Upper lobe of right lung (tissue), 1 donor: ENCODE measurements at regions of chr7 and their contacts with region 1.

Region 1: GRCh38 chr7:39582536-39582935 is 16.3 kb downstream of the YAE1 start:
- DNase-seq: no peak
- ATAC-seq: no peak
- H3K4me3 ChIP-seq: no peak overlapping the region
- H3K27ac ChIP-seq: no peak overlapping the region
- H3K4me1 ChIP-seq: no peaks in the 10 kb centered on the region
- H3K27me3 ChIP-seq: no peaks in the 10 kb centered on the region
- CTCF ChIP-seq: no peak

Region 2: GRCh38 chr7:38438970-38439369 is 1143.6 kb before region 1 on chr7:
- intact Hi-C with region 1: no loop called
- DNase-seq: no peak
- ATAC-seq: no peak
- H3K4me3 ChIP-seq: no peak overlapping the region
- H3K27ac ChIP-seq: no peak overlapping the region
- H3K4me1 ChIP-seq: no peaks in the 10 kb centered on the region
- H3K27me3 ChIP-seq: no peaks in the 10 kb centered on the region
- CTCF ChIP-seq: no peak

Region 3: DNA sequence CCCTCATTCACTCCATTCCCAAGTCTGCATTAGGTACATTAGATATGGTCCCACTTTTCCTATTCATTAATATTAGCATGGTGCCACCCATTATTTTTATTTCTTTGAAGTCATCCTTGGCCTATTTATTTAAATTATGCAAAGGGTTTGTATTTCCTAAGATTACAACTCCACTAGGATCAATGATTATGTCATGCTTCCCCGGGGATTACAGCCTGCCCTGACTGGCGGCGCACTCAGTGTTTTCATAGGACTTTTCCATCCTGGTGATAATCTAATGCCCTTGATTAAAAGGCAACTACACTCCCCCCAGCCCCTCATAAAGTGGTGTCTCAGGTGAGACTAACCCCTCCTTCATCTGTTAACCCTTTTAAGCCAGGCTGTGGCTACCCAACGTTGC is 417.6 kb before region 1 on chr7:
- intact Hi-C with region 1: no loop called
- DNase-seq: no peak
- ATAC-seq: no peak
- H3K4me3 ChIP-seq: no peak overlapping the region
- H3K27ac ChIP-seq: no peak overlapping the region
- H3K4me1 ChIP-seq: no peaks in the 10 kb centered on the region
- H3K27me3 ChIP-seq: no peaks in the 10 kb centered on the region
- CTCF ChIP-seq: no peak

Region 4: DNA sequence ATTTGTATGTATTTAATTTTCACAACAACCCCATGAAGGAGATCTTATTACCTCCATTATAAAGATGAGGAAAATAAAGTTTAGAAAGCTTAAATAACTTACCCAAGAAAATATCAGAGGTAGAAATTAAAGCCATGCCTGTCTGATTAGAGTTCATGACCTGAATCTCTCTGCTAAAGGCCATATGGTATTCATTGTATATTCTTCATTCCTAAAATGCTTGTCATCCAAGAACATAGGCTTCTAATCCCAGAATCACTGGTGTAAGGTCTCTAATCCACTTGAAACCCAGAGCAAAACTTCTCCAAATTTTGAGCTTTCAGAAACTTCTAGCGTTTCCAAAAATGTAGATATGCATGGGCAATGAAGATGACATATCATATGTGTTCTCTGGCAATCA is 88.6 kb before region 1 on chr7:
- intact Hi-C with region 1: no loop called
- DNase-seq: no peak
- ATAC-seq: no peak
- H3K4me3 ChIP-seq: no peak overlapping the region
- H3K27ac ChIP-seq: no peak overlapping the region
- H3K4me1 ChIP-seq: no peaks in the 10 kb centered on the region
- H3K27me3 ChIP-seq: no peaks in the 10 kb centered on the region
- CTCF ChIP-seq: no peak

Region 5: GRCh38 chr7:39623018-39623731 is 40.6 kb after region 1 on chr7 and contains the start of gene RALA:
- intact Hi-C with region 1: no loop called
- DNase-seq: peak; percentile 96
- ATAC-seq: peak; percentile 99
- H3K4me3 ChIP-seq: peak within 1 kb of the TSS; percentile 79
- H3K27ac ChIP-seq: peak within 1 kb of the TSS; percentile 93
- H3K4me1 ChIP-seq: peaks cover 32% of the 10 kb centered on the region
- H3K27me3 ChIP-seq: no peaks in the 10 kb centered on the region
- CTCF ChIP-seq: no peak
- total RNA-seq, gene RALA: 53.4 TPM

Region 6: DNA sequence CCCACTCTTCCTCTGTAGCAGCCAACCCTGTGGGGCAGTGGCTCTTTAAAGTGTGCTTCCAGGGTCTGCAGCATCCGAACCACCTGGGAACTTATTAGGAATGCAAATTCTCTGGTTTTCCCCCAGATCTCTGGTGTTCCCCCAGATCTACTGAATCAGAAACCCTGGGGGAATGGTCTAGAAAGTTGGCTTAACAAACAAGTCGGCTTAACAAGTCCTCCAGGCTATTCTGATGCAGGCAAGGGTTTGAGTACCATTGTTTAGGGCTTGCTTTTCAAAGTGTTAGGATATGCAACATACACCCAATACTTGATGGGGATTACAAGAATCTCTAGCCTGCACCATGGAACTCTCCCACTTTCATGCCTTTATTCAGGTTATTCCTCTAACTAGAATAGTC is 167.2 kb after region 1 on chr7:
- intact Hi-C with region 1: loop called (anchors 2 kb)
- DNase-seq: no peak
- ATAC-seq: no peak
- H3K4me3 ChIP-seq: no peak overlapping the region
- H3K27ac ChIP-seq: no peak overlapping the region
- H3K4me1 ChIP-seq: no peaks in the 10 kb centered on the region
- H3K27me3 ChIP-seq: no peaks in the 10 kb centered on the region
- CTCF ChIP-seq: no peak